HepG2 (cell line): ENCODE measurements at regions of chr16 and their contacts with region 1.

Region 1: DNA sequence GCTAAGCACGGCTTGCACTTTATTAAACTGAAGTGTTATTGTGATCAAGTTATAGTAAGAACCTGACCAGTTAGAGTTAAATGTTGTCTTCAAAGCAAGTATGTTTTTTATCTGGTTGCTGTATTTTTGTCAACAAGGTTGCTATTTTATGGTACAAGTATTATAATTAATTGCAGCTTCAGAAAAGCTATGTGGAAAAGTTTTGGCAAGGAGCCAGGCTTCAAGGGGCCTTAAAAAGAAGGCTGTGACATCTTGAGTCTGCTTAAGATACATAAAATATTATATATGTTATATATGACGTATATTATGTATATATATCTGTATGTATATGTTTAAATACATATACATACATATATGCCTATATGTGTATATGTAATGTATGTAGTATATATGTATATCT is 1461.2 kb upstream of the CDH8 start:
- DNase-seq: no peak
- ATAC-seq: no peak
- H3K4me3 ChIP-seq: no peak overlapping the region
- H3K27ac ChIP-seq: no peak overlapping the region
- H3K4me1 ChIP-seq: no peaks in the 10 kb centered on the region
- H3K27me3 ChIP-seq: no peaks in the 10 kb centered on the region
- CTCF ChIP-seq: no peak
- EP300 ChIP-seq: no peak
- POLR2A ChIP-seq: no peak
- RAD21 ChIP-seq: no peak

Region 2: GRCh38 chr16:63426275-63426870 is 71.0 kb before region 1 on chr16:
- CTCF ChIA-PET with region 1: no interaction called
- POLR2A ChIA-PET with region 1: no interaction called
- in situ Hi-C with region 1: no loop called
- intact Hi-C with region 1: loop called (anchors 10 kb)
- DNase-seq: no peak
- ATAC-seq: no peak
- H3K4me3 ChIP-seq: no peak overlapping the region
- H3K27ac ChIP-seq: no peak overlapping the region
- H3K4me1 ChIP-seq: no peaks in the 10 kb centered on the region
- H3K27me3 ChIP-seq: no peaks in the 10 kb centered on the region
- CTCF ChIP-seq: no peak
- EP300 ChIP-seq: no peak
- POLR2A ChIP-seq: no peak
- RAD21 ChIP-seq: no peak

Region 3: DNA sequence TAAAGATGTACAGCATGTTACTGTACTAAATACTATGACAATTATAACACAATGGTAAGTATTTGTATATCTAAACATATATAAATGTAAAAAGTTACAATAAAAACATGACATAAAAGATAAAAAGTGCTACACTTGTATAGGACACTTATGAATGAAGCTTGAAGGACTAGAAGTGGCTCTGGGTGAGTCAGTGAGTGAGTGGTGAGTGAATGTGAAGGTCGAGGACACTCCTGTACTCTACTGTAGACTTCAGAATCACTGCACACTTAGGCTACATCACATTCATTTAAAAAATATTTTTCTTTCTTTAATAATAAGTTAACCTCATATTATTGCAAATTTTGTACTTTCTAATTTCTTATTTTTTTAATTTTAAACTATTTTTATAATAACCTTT is 15.5 kb after region 1 on chr16:
- CTCF ChIA-PET with region 1: no interaction called
- POLR2A ChIA-PET with region 1: no interaction called
- in situ Hi-C with region 1: no loop called
- intact Hi-C with region 1: no loop called
- DNase-seq: no peak
- ATAC-seq: no peak
- H3K4me3 ChIP-seq: no peak overlapping the region
- H3K27ac ChIP-seq: no peak overlapping the region
- H3K4me1 ChIP-seq: no peaks in the 10 kb centered on the region
- H3K27me3 ChIP-seq: no peaks in the 10 kb centered on the region
- CTCF ChIP-seq: no peak
- EP300 ChIP-seq: no peak
- POLR2A ChIP-seq: no peak
- RAD21 ChIP-seq: no peak